Endothelial cell of umbilical vein (primary cell): ENCODE measurements at regions of chr15 and their contacts with region 1.

Region 1: DNA sequence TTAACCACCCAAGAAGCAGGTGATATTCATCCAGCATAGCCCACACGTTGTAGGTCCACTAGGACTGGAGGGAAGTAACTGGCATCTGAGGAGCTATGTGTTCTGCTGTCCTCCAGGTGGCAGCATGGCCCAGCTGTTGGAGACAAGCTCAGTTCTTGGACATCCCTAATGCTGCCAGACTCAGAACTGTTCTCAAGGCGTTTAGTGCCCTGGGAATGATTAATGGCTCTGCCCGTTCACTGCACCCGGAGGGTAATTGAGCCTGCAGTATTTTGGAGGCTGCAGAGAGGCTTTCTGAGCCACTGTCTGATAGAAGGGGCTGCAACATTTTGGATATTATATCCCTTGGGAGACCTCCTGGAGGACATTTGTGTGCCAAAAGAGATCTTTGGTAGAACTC is 521.2 kb upstream of the SEMA6D start:
- DNase-seq: peak; percentile 83
- H3K4me3 ChIP-seq: no peak overlapping the region
- H3K27ac ChIP-seq: no peak overlapping the region
- H3K4me1 ChIP-seq: peaks cover 3% of the 10 kb centered on the region
- H3K27me3 ChIP-seq: no peaks in the 10 kb centered on the region
- CTCF ChIP-seq: peak; percentile 85
- POLR2A ChIP-seq: no peak

Region 2: GRCh38 chr15:45705510-45706473 is 1490.3 kb before region 1 on chr15:
- CTCF ChIA-PET with region 1: interaction called, 8 read pairs
- POLR2A ChIA-PET with region 1: no interaction called
- dilution Hi-C with region 1: no loop called
- intact Hi-C with region 1: loop called (anchors 5 kb)
- DNase-seq: peak; percentile 90
- H3K4me3 ChIP-seq: peak overlapping the region; percentile 42 to 78 (median 51)
- H3K27ac ChIP-seq: no peak overlapping the region
- H3K4me1 ChIP-seq: peaks cover 4% of the 10 kb centered on the region
- H3K27me3 ChIP-seq: no peaks in the 10 kb centered on the region
- CTCF ChIP-seq: peak; percentile 83 to 87
- POLR2A ChIP-seq: no peak

Region 3: DNA sequence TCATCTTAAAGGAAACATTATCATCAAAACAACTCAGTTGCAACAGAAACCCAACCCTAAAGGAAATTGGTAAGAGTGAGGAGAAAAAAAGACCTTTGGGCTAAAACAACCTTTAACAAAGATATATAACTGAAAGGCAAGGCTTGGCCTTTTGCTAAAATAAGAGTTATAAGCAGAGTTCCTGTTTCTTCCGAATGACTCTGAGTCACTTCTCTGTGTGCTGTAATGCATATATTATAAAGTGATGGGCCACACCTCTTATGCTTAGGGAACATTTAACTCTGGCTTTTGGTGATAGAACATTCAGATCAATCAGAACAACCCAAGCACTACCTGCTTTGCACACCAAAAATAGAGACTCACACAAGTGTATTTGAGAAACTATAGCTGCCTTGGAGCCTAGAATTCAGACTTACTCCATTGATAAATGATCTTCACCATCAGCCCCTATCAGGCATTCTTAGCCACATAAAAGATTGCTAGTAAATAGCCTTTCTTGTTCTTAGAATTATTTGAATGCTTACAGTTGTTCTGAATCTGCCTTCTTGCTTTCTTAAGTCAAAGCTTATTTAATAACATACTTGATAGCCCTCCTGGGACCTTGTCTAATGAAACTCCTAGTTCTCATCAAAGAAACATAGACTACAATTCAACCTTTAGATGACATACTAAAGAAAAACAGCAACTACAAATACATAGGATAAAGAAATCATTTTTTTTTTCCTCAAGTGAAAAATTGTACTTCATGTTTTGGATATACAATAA is 227.0 kb after region 1 on chr15:
- CTCF ChIA-PET with region 1: interaction called, 3 read pairs
- POLR2A ChIA-PET with region 1: no interaction called
- dilution Hi-C with region 1: no loop called
- intact Hi-C with region 1: loop called (anchors 5 kb)
- DNase-seq: peak; percentile 76
- H3K4me3 ChIP-seq: no peak overlapping the region
- H3K27ac ChIP-seq: peak overlapping the region; percentile 84
- H3K4me1 ChIP-seq: peaks cover 34% of the 10 kb centered on the region
- H3K27me3 ChIP-seq: no peaks in the 10 kb centered on the region
- CTCF ChIP-seq: no peak
- POLR2A ChIP-seq: no peak

Region 4: GRCh38 chr15:47551079-47551478 is 355.0 kb after region 1 on chr15:
- CTCF ChIA-PET with region 1: interaction called, 13 read pairs
- POLR2A ChIA-PET with region 1: no interaction called
- dilution Hi-C with region 1: no loop called
- intact Hi-C with region 1: no loop called
- DNase-seq: peak; percentile 20
- H3K4me3 ChIP-seq: no peak overlapping the region
- H3K27ac ChIP-seq: no peak overlapping the region
- H3K4me1 ChIP-seq: no peaks in the 10 kb centered on the region
- H3K27me3 ChIP-seq: no peaks in the 10 kb centered on the region
- CTCF ChIP-seq: peak in 1 of 2 donors; percentile 31
- POLR2A ChIP-seq: no peak

Region 5: DNA sequence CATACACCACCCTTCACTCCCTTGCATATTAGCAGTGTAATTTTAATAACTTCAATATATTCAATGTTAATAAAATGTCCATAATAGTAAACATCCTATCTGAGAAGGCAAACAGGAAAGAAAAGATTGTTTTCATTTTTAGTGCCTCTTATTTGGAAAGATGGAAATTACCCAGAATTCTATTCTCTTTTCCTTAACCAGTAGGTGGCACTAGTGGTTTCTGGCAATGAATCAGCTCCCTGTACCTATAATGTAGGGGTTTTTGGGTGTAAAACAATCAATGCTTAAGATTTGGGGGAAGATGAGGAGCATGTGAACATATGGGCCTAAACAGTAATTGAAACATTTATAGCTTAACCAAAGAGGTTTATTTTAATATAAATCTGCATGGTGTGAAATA is 515.6 kb after region 1 on chr15:
- CTCF ChIA-PET with region 1: interaction called, 91 read pairs
- POLR2A ChIA-PET with region 1: no interaction called
- dilution Hi-C with region 1: no loop called
- intact Hi-C with region 1: no loop called
- DNase-seq: peak; percentile 26
- H3K4me3 ChIP-seq: no peak overlapping the region
- H3K27ac ChIP-seq: no peak overlapping the region
- H3K4me1 ChIP-seq: peaks cover 17% of the 10 kb centered on the region
- H3K27me3 ChIP-seq: no peaks in the 10 kb centered on the region
- CTCF ChIP-seq: peak; percentile 24 to 39
- POLR2A ChIP-seq: no peak

Region 6: GRCh38 chr15:47955021-47955420 is 759.0 kb after region 1 on chr15:
- CTCF ChIA-PET with region 1: interaction called, 11 read pairs
- POLR2A ChIA-PET with region 1: no interaction called
- dilution Hi-C with region 1: no loop called
- intact Hi-C with region 1: no loop called
- DNase-seq: no peak
- H3K4me3 ChIP-seq: no peak overlapping the region
- H3K27ac ChIP-seq: no peak overlapping the region
- H3K4me1 ChIP-seq: no peaks in the 10 kb centered on the region
- H3K27me3 ChIP-seq: peaks cover 0 to 10% of the 10 kb centered on the region in 2 experiments
- CTCF ChIP-seq: no peak
- POLR2A ChIP-seq: no peak

Region 7: GRCh38 chr15:48250640-48251076 is 1054.6 kb after region 1 on chr15:
- CTCF ChIA-PET with region 1: interaction called, 15 read pairs
- POLR2A ChIA-PET with region 1: no interaction called
- dilution Hi-C with region 1: no loop called
- intact Hi-C with region 1: loop called (anchors 1 kb)
- DNase-seq: peak; percentile 71
- H3K4me3 ChIP-seq: no peak overlapping the region
- H3K27ac ChIP-seq: no peak overlapping the region
- H3K4me1 ChIP-seq: no peaks in the 10 kb centered on the region
- H3K27me3 ChIP-seq: no peaks in the 10 kb centered on the region
- CTCF ChIP-seq: peak; percentile 57 to 61
- POLR2A ChIP-seq: no peak